ENCODE measurements at regions of chr4 and their contacts with region 1.

Region 1: GRCh38 chr4:39044364-39044955 is 12.3 kb upstream of the TMEM156 start:
- DNase-seq: peak; percentile 85 to 99 (median 93)
- ATAC-seq: peak; percentile 83
- H3K4me3 ChIP-seq: peak overlapping the region; percentile 60 to 66
- H3K4me3 Mint-ChIP-seq: peak overlapping the region; percentile 92
- H3K27ac ChIP-seq: peak overlapping the region; percentile 59 to 89
- H3K27ac Mint-ChIP-seq: peak overlapping the region; percentile 96
- H3K4me1 ChIP-seq: peaks cover 21% of the 10 kb centered on the region
- H3K4me1 Mint-ChIP-seq: peaks cover 53% of the 10 kb centered on the region
- H3K27me3 ChIP-seq: no peaks in the 10 kb centered on the region
- H3K27me3 Mint-ChIP-seq: no peaks in the 10 kb centered on the region
- CTCF ChIP-seq: no peak

Region 2: GRCh38 chr4:38949411-38950051 is 94.9 kb before region 1 on chr4:
- CTCF ChIA-PET with region 1: no interaction called
- POLR2A ChIA-PET with region 1: no interaction called
- intact Hi-C with region 1: loop called in 1 of 2 experiments (anchors 5 kb)
- DNase-seq: peak; percentile 2 to 85 (median 39)
- ATAC-seq: peak; percentile 83
- H3K4me3 ChIP-seq: no peak overlapping the region
- H3K4me3 Mint-ChIP-seq: no peak overlapping the region
- H3K27ac ChIP-seq: peak overlapping the region; percentile 14 to 20
- H3K27ac Mint-ChIP-seq: peak overlapping the region; percentile 88
- H3K4me1 ChIP-seq: peaks cover 13% of the 10 kb centered on the region
- H3K4me1 Mint-ChIP-seq: peaks cover 16% of the 10 kb centered on the region
- H3K27me3 ChIP-seq: no peaks in the 10 kb centered on the region
- H3K27me3 Mint-ChIP-seq: peaks cover 2% of the 10 kb centered on the region
- CTCF ChIP-seq: no peak

Region 3: GRCh38 chr4:38993694-38994093 is 50.8 kb before region 1 on chr4:
- CTCF ChIA-PET with region 1: interaction called, 3 read pairs
- POLR2A ChIA-PET with region 1: no interaction called
- intact Hi-C with region 1: loop called (anchors 2 to 5 kb)
- DNase-seq: no peak
- ATAC-seq: no peak
- H3K4me3 ChIP-seq: no peak overlapping the region
- H3K4me3 Mint-ChIP-seq: no peak overlapping the region
- H3K27ac ChIP-seq: no peak overlapping the region
- H3K27ac Mint-ChIP-seq: no peak overlapping the region
- H3K4me1 ChIP-seq: no peaks in the 10 kb centered on the region
- H3K4me1 Mint-ChIP-seq: no peaks in the 10 kb centered on the region
- H3K27me3 ChIP-seq: no peaks in the 10 kb centered on the region
- H3K27me3 Mint-ChIP-seq: no peaks in the 10 kb centered on the region
- CTCF ChIP-seq: no peak

Region 4: GRCh38 chr4:39014028-39014427 is 30.4 kb before region 1 on chr4:
- CTCF ChIA-PET with region 1: no interaction called
- POLR2A ChIA-PET with region 1: no interaction called
- intact Hi-C with region 1: no loop called
- DNase-seq: no peak
- ATAC-seq: no peak
- H3K4me3 ChIP-seq: no peak overlapping the region
- H3K4me3 Mint-ChIP-seq: no peak overlapping the region
- H3K27ac ChIP-seq: no peak overlapping the region
- H3K27ac Mint-ChIP-seq: no peak overlapping the region
- H3K4me1 ChIP-seq: no peaks in the 10 kb centered on the region
- H3K4me1 Mint-ChIP-seq: peaks cover 22% of the 10 kb centered on the region
- H3K27me3 ChIP-seq: no peaks in the 10 kb centered on the region
- H3K27me3 Mint-ChIP-seq: no peaks in the 10 kb centered on the region
- CTCF ChIP-seq: no peak

Region 5: DNA sequence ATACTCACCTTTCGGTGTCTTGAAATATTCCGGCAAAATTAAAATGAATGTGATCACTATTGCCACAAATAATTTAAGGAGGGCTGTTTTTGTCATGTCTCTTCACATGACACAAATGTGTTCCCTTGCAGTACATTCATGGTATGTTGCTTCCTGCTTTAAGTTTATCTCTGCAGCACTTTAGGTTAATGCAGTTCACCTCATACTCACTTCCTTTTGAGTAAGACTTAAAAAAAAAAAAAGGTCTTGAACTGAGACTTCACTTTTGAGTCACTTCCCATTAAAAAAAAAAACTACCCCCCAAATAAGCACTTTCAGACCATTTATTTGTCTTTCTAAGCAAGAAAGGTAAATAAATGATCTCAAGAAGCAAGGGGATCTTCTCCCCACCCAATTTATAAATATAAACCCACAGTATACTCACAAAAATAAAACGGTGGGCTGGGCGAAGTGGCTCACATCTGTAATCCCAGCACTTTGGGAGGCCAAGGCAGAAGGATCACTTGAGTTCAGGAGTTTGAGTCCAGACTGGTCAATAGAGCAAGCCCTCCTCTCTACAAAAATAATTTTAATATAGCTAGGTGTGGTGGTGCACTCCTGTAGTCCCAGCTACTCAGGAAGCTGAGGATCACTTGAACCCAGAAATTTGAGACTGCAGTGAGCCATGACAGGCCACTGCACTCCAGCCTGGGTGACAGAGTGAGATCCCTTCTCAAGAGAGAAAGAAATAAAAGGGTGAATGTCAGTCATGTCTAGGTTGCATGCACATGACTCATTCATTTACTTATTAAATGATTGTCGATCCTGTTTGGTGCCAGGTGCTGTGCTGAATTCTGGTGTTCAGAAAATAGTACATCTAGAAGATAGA is 12.0 kb before region 1 on chr4 and contains the start of gene TMEM156:
- CTCF ChIA-PET with region 1: interaction called, 4 read pairs
- POLR2A ChIA-PET with region 1: interaction called, 5 read pairs
- intact Hi-C with region 1: loop called (anchors 1 kb)
- DNase-seq: peak in 2 of 9 experiments; percentile 67 to 86
- ATAC-seq: peak; percentile 88
- H3K4me3 ChIP-seq: peak within 1 kb of the TSS; percentile 43 to 49
- H3K4me3 Mint-ChIP-seq: peak within 1 kb of the TSS; percentile 83
- H3K27ac ChIP-seq: peak within 1 kb of the TSS; percentile 30 to 69
- H3K27ac Mint-ChIP-seq: peak within 1 kb of the TSS; percentile 90
- H3K4me1 ChIP-seq: peaks cover 49% of the 10 kb centered on the region
- H3K4me1 Mint-ChIP-seq: peaks cover 39% of the 10 kb centered on the region
- H3K27me3 ChIP-seq: no peaks in the 10 kb centered on the region
- H3K27me3 Mint-ChIP-seq: no peaks in the 10 kb centered on the region
- CTCF ChIP-seq: no peak
- total RNA-seq, gene TMEM156: 8.4 to 9.4 TPM